Cardiac septum (tissue), 1 donor: ENCODE measurements at regions of chr5 and their contacts with region 1.

Region 1: GRCh38 chr5:127885176-127885575 is 182.0 kb downstream of the CCDC192 start:
- DNase-seq: no peak

Region 2: DNA sequence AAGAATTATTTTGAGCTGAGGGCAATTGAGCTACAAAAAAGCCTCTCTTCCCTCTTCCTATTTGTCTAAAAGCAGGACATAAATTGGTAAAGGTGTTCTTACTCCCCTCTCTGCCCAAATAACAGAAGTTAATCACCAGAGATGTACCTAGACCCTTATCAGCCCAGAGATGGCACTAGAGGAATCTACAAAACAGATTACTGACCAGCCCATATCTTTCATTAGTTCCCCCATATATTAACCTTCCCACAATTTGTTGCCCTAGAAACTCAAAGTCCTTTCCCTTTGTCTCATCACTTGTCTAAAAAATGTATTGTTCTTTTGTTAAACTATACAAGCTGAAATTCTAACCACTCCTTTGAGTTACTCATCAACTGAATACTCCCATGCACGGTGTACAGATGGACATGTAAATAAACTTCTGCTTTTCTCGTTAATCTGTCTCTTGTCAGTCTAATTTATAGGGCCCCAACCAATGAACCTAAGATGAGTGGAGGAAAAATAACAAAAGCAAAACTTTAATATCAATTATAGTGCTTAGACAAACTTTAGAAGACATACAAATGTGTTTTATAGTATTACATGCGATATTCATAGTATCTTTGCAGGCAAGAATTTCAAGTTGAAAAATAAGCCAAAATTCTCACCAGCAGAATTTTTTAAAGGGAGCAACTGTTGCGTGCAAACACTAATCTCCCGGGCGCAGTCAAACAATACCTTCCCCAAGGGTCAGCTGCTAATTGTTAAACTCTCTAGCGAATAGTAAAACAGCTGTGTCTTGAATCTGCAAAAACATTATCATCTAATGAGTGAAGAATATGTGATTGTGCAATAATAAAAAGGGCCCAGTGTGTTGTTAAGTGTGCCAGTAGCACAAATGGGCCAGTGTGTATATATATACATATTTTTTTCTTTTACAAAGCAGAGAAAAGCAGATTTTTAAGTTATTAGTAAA is 50.9 kb before region 1 on chr5:
- intact Hi-C with region 1: no loop called
- DNase-seq: no peak

Region 3: DNA sequence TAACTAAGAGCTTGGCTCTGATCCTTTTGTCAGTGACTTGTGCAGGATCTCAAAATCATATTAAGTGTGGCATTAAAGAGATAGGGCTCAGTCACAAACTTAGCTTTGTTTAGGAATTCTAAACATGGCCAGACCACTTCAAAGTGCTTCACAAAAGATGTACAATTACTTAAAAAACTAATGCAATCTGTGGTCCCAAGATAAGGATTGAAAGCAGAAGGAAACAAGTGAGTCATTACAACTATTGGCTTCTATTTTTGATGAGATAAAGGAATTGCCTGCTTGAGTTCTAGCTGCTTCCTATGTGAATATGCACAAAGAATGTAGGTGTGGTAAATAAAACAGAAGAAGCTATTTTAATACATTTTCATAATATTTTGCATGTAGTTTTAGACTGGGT is 153.5 kb after region 1 on chr5:
- intact Hi-C with region 1: loop called (anchors 5 kb)
- DNase-seq: no peak

Region 4: DNA sequence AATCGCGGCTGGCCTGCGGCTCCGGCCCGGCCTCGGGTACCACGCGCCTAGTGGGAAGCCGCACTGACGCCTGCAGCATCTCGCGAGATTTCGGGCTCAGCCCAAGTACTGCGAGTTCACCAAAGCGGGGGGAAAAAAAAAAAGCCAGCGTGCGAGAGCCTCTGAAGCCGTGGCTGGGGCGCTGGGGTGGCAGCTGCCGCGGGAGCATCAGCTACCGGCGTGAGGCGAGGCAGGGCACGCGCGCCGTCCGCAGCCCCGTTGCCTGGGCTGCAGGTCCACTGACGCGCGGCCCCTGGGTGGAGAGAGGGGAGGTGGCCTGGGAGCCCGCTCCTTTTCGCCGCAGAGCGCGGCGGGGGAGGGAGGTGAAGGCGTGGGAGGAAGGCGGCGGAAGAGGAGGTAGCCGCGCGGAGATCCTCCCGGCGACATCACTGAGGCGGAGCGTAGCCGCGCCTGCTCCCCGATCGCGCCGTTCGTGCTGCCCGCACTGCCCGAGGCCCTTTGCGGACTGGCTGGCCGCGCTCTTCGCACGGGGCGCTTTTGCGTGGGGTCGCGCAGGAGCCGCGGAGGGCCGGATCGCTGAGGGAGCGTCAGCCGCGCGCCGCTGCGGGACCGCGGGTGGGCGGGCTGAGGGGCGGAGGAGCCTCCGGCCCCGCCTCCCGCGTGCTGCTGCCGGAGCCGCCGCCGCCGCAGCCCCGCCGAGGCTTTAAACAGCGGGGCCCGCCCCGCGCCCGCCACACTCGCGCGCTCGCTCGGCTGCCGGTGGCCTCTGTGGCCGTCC is 198.0 kb after region 1 on chr5 and contains the start of gene SLC12A2:
- intact Hi-C with region 1: no loop called
- DNase-seq: peak; percentile 96
- total RNA-seq, gene SLC12A2: 21.6 TPM